ENCODE measurements at regions of chr4 and their contacts with region 1.

Region 1: GRCh38 chr4:146342600-146343192 is 128.4 kb downstream of the REELD1 start:
- DNase-seq: peak; percentile 78
- ATAC-seq: peak; percentile 27; the same call in 1 of the 2 replicates
- H3K4me3 ChIP-seq: no peak overlapping the region
- H3K27ac ChIP-seq: no peak overlapping the region
- H3K4me1 ChIP-seq: peaks cover 8% of the 10 kb centered on the region
- H3K27me3 ChIP-seq: no peaks in the 10 kb centered on the region
- CTCF ChIP-seq: peak; percentile 46

Region 2: GRCh38 chr4:146175541-146176453 is 166.9 kb before region 1 on chr4 and contains the start of gene LSM6:
- CTCF ChIA-PET with region 1: no interaction called
- POLR2A ChIA-PET with region 1: no interaction called
- intact Hi-C with region 1: loop called (anchors 5 kb)
- DNase-seq: peak; percentile 87
- ATAC-seq: peak; percentile 83
- H3K4me3 ChIP-seq: peak within 1 kb of the TSS; percentile 84
- H3K27ac ChIP-seq: peak within 1 kb of the TSS; percentile 42
- H3K4me1 ChIP-seq: peaks cover 14% of the 10 kb centered on the region
- H3K27me3 ChIP-seq: no peaks in the 10 kb centered on the region
- CTCF ChIP-seq: no peak
- total RNA-seq, gene LSM6: 62.8 and 76.3 TPM in 2 replicates

Region 3: GRCh38 chr4:146465628-146466027 is 122.9 kb after region 1 on chr4:
- CTCF ChIA-PET with region 1: no interaction called
- POLR2A ChIA-PET with region 1: no interaction called
- intact Hi-C with region 1: loop called (anchors 10 kb)
- DNase-seq: no peak
- ATAC-seq: no peak
- H3K4me3 ChIP-seq: no peak overlapping the region
- H3K27ac ChIP-seq: no peak overlapping the region
- H3K4me1 ChIP-seq: no peaks in the 10 kb centered on the region
- H3K27me3 ChIP-seq: no peaks in the 10 kb centered on the region
- CTCF ChIP-seq: no peak

Region 4: DNA sequence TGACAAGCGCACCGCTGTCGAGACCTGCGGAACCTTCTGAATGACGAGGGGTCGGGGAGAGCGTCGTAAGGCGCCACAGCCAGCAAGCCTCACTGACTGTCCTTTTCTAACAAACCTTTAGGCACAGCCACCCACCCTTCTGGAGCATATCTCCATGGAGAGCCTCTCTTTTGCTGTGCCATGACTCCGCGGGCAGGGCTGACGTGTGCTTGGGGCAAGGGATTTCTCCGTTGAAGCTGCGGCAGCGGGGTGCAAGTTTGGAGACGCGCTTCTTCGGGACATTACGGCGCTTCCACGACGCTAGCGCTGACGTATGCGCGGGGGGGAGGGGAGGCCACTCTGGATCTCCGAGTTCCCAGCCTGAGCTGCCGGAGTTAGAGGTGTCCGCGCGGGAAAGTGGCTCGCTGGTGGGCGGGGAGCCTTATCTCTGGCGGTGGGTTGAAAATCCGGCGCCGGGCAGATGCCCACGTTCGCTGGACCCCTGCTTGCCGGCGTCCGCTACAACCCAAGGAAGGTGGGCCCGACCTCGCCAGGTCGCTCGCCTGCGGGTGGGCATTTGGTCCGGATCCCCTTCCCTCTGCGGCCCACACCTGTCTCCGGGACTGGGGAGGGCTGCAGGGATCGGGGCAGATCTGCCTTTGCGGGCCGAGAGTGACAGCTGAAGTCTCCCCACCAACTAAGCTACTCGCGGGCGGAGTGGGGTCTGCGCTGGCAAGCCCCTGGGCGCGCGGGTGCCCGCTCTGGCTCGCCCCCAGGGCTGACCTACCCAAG is 179.6 kb after region 1 on chr4:
- CTCF ChIA-PET with region 1: interaction called, 7 read pairs
- POLR2A ChIA-PET with region 1: no interaction called
- intact Hi-C with region 1: loop called (anchors 1 kb)
- DNase-seq: peak; percentile 85
- ATAC-seq: peak; percentile 77
- H3K4me3 ChIP-seq: peak overlapping the region; percentile 93
- H3K27ac ChIP-seq: no peak overlapping the region
- H3K4me1 ChIP-seq: peaks cover 15% of the 10 kb centered on the region; the same call in 1 of the 2 replicates
- H3K27me3 ChIP-seq: no peaks in the 10 kb centered on the region
- CTCF ChIP-seq: no peak

Region 5: GRCh38 chr4:146916479-146917076 is 573.9 kb after region 1 on chr4:
- CTCF ChIA-PET with region 1: interaction called, 5 read pairs
- POLR2A ChIA-PET with region 1: no interaction called
- intact Hi-C with region 1: loop called (anchors 1 kb)
- DNase-seq: peak; percentile 67
- ATAC-seq: no peak
- H3K4me3 ChIP-seq: no peak overlapping the region
- H3K27ac ChIP-seq: no peak overlapping the region
- H3K4me1 ChIP-seq: no peaks in the 10 kb centered on the region
- H3K27me3 ChIP-seq: peaks cover 60% of the 10 kb centered on the region
- CTCF ChIP-seq: peak; percentile 91